Activated naive CD4-positive, alpha-beta T cell treated with anti-CD3 and anti-CD28 coated beads for 36 hours (primary cell): ENCODE measurements at regions of chr5 and their contacts with region 1.

Region 1: GRCh38 chr5:77630258-77631089 is 8.0 kb downstream of the OTP start:
- DNase-seq: peak; percentile 72
- H3K4me3 Mint-ChIP-seq: peak overlapping the region; percentile 77
- H3K27ac Mint-ChIP-seq: no peak overlapping the region
- H3K4me1 Mint-ChIP-seq: peaks cover 20% of the 10 kb centered on the region
- H3K27me3 Mint-ChIP-seq: peaks cover 70% of the 10 kb centered on the region

Region 2: DNA sequence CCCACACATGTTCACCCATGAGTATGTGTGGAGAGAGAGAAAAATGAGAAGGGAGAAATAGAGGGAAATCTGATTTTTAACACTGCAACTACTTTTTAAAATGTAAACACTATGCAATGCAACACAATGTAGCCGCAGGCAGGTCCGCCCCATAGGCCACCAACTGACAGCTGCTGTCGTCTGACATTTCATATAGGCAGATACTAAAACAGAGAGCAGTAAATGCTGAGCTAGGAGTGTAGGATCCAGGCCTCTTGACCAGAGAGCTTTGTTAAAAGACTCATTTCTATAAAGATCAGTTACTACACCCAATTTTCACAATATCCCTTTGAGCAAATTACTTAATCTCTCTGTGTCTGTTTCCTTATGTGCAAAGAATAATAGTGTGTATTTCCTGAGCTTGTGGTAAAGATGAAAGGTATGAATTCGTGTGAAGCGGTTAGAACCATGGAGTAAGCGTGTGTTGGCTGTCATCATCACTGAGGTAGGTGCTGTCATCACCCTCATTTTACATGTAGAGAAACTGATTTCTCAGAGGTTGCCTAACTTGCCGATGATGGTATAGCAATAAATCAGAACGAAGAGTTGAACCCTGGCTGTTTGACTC is 475.2 kb before region 1 on chr5:
- CTCF ChIA-PET with region 1: no interaction called
- intact Hi-C with region 1: no loop called
- DNase-seq: peak; percentile 66
- H3K4me3 Mint-ChIP-seq: no peak overlapping the region
- H3K27ac Mint-ChIP-seq: peak overlapping the region; percentile 60
- H3K4me1 Mint-ChIP-seq: peaks cover 27% of the 10 kb centered on the region
- H3K27me3 Mint-ChIP-seq: no peaks in the 10 kb centered on the region

Region 3: GRCh38 chr5:77518304-77518703 is 112.2 kb before region 1 on chr5:
- CTCF ChIA-PET with region 1: no interaction called
- intact Hi-C with region 1: loop called (anchors 10 kb)
- DNase-seq: no peak
- H3K4me3 Mint-ChIP-seq: no peak overlapping the region
- H3K27ac Mint-ChIP-seq: no peak overlapping the region
- H3K4me1 Mint-ChIP-seq: no peaks in the 10 kb centered on the region
- H3K27me3 Mint-ChIP-seq: peaks cover 9% of the 10 kb centered on the region